K562 (cell line): ENCODE measurements at regions of chr2 and their contacts with region 1.

Region 1: DNA sequence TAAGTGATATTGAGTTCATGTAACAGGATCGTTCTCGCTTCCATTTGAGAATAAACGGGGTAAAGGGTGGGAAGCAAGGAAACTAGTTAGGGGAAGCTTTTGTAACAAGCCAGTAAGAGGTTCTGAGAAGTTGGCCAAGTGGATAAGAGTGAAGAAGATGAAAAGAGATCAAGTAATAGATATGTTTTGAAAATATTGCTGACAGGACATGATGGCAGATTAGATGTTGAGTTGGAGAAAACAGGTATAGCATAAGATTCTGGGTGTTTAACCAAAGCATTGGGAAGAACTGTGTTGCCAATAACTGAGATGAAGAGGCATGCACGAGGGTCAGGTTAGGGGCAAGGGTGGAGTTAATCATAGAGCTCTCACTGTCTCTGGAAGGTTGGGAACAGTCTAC is 330.0 kb upstream of the LRRTM1 start:
- DNase-seq: no peak
- ATAC-seq: no peak
- H3K4me3 ChIP-seq: no peak overlapping the region
- H3K27ac ChIP-seq: no peak overlapping the region
- H3K4me1 ChIP-seq: no peaks in the 10 kb centered on the region
- H3K27me3 ChIP-seq: no peaks in the 10 kb centered on the region
- CTCF ChIP-seq: no peak
- EP300 ChIP-seq: no peak
- POLR2A ChIP-seq: no peak
- RAD21 ChIP-seq: no peak

Region 2: GRCh38 chr2:79155826-79156476 is 1478.6 kb before region 1 on chr2:
- CTCF ChIA-PET with region 1: interaction called, 10 read pairs
- POLR2A ChIA-PET with region 1: no interaction called
- in situ Hi-C with region 1: no loop called
- intact Hi-C with region 1: no loop called
- DNase-seq: no peak
- ATAC-seq: no peak
- H3K4me3 ChIP-seq: no peak overlapping the region
- H3K27ac ChIP-seq: no peak overlapping the region
- H3K4me1 ChIP-seq: no peaks in the 10 kb centered on the region
- H3K27me3 ChIP-seq: no peaks in the 10 kb centered on the region
- CTCF ChIP-seq: no peak
- EP300 ChIP-seq: no peak
- POLR2A ChIP-seq: no peak
- RAD21 ChIP-seq: no peak

Region 3: DNA sequence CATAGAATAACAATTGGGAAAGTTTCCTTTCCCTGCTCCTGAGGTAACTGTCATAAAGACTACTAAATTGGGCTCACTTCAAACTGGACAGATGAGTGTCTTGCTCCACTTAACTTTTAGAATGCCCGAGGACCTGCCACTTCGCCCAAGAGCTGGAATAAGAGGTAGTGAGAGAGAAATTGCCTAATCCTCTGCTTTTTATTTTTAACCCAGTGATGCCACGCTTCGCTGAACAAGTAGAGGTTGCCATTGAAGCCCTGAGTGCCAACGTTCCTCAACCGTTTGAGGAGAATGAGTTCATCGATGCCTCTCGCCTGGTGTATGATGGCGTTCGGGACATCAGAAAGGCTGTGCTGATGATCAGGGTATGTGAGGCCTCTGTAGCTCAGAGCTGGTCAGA is 60.6 kb before region 1 on chr2:
- CTCF ChIA-PET with region 1: no interaction called
- POLR2A ChIA-PET with region 1: no interaction called
- in situ Hi-C with region 1: no loop called
- intact Hi-C with region 1: no loop called
- DNase-seq: no peak
- ATAC-seq: no peak
- H3K4me3 ChIP-seq: no peak overlapping the region
- H3K27ac ChIP-seq: no peak overlapping the region
- H3K4me1 ChIP-seq: no peaks in the 10 kb centered on the region
- H3K27me3 ChIP-seq: no peaks in the 10 kb centered on the region
- CTCF ChIP-seq: no peak
- EP300 ChIP-seq: no peak
- POLR2A ChIP-seq: no peak
- RAD21 ChIP-seq: no peak